Lower leg skin (tissue), 4 donors: ENCODE measurements at regions of chr4 and their contacts with region 1.

Region 1: DNA sequence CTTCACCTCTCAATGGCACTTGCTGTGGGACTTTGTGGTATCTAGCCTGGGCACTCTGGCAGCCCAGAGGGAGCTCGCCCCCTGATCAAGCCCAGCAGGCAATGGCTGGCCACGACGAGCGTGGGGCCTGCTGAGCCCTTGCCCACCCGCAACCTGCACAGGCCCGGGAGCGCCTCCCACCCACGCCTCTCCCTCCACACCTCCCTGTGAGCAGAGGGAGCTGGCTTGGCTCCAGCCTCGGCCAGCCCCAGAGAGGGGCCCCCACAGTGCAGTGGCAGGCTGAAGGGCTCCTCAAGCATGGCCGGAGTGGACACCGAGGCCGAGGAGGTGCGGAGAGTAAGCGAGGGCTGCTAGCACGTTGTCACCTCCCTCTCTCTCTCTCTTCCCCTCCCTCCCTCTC is 595.8 kb downstream of the TRIML1 start:
- DNase-seq: no peak
- H3K4me3 ChIP-seq: no peak overlapping the region
- CTCF ChIP-seq: no peak
- POLR2A ChIP-seq: no peak

Region 2: GRCh38 chr4:187268940-187269339 is 1466.1 kb before region 1 on chr4:
- intact Hi-C with region 1: loop called (anchors 5 kb)
- DNase-seq: no peak
- H3K4me3 ChIP-seq: no peak overlapping the region
- CTCF ChIP-seq: no peak
- POLR2A ChIP-seq: no peak

Region 3: DNA sequence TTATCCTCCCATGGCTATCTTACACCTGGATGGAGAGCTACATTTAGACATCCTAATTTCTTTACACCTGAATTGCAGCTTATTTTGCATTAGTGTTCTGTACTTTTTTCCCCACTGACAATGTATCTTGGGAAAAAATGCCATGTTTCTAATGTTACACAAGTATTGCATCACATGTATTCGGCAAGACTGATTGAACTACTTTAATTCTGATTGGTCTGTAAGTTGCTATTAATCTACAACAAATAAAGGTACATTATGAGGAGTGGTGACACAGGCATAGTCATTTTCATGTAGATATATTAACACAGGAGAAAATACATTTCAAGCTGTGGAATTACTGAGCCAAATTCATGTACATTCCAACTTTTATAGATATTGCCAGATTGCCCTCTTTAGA is 37.8 kb before region 1 on chr4:
- intact Hi-C with region 1: no loop called
- DNase-seq: no peak
- H3K4me3 ChIP-seq: no peak overlapping the region
- CTCF ChIP-seq: no peak
- POLR2A ChIP-seq: no peak

Region 4: DNA sequence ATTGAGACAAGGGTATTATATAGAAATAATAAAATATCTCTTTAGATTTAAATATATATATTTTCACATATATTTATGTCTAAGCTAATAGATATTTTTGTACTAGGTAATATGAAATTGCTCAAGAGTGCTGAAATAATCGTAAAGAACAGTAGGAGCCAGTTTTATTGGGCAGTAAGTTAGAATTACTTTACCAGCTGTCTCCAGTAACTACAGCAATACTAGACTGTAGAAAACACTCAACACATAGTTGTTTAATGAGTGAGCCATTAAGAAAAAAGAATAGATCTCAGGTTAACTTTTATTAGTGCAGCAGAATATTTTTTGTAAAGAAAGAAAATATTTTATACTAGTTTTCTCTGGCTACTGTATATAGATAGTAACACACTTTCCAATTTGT is 119.4 kb after region 1 on chr4:
- intact Hi-C with region 1: no loop called
- DNase-seq: no peak
- H3K4me3 ChIP-seq: no peak overlapping the region
- CTCF ChIP-seq: no peak
- POLR2A ChIP-seq: no peak